A549 (cell line): ENCODE measurements at regions of chr3 and their contacts with region 1.

Region 1: DNA sequence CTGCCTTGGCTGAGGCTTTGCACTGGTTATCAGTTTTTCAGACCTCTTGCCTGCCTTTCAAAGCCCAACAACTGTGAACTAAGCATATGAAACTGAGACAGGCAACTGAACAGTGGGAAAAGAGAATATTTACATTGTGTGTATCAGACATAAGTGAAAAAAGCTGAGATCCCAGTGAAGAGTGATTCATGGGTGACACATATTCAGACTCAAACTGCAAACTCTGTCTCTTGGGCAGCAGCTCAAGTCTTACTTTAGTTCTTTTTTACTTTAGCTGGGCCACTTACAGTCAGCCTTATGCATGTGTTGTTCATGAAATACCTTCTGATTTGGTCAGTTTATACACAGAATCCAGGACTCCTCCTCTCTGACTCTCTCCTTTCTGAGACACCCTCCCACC is 19.2 kb downstream of the SUCLG2 start:
- DNase-seq: peak; percentile 7 to 52
- ATAC-seq: peak; percentile 80 to 89; a peak in 5 of 6 replicates
- H3K4me3 ChIP-seq: no peak overlapping the region
- H3K27ac ChIP-seq: peak overlapping the region; percentile 73 to 91
- H3K4me1 ChIP-seq: peaks cover 46% of the 10 kb centered on the region
- CTCF ChIP-seq: no peak
- EP300 ChIP-seq: no peak
- POLR2A ChIP-seq: no peak
- RAD21 ChIP-seq: no peak

Region 2: GRCh38 chr3:67384760-67385397 is 250.4 kb before region 1 on chr3:
- CTCF ChIA-PET with region 1: no interaction called
- POLR2A ChIA-PET with region 1: no interaction called
- DNase-seq: peak; percentile 6 to 57
- ATAC-seq: peak; percentile 47 to 83; a peak in 5 of 6 replicates
- H3K4me3 ChIP-seq: no peak overlapping the region
- H3K27ac ChIP-seq: no peak overlapping the region
- H3K4me1 ChIP-seq: 0 out of 3 replicates have a peak, but pooled peaks cover 10% of the 10 kb centered on the region
- CTCF ChIP-seq: peak; percentile 34
- EP300 ChIP-seq: no peak
- POLR2A ChIP-seq: no peak
- RAD21 ChIP-seq: peak in 1 of 2 experiments; percentile 47; a peak in 3 of 5 replicates

Region 3: GRCh38 chr3:67593761-67594244 is 41.5 kb before region 1 on chr3:
- CTCF ChIA-PET with region 1: no interaction called
- POLR2A ChIA-PET with region 1: no interaction called
- DNase-seq: peak; percentile 4 to 75
- ATAC-seq: peak; percentile 86 to 93; a peak in 5 of 6 replicates
- H3K4me3 ChIP-seq: no peak overlapping the region
- H3K27ac ChIP-seq: peak overlapping the region; percentile 32 to 57; a peak in 4 of 6 replicates
- H3K4me1 ChIP-seq: peaks cover 17% of the 10 kb centered on the region
- CTCF ChIP-seq: 0 out of 3 replicates have a peak, but pooled peaks have one; percentile 15
- EP300 ChIP-seq: no peak
- POLR2A ChIP-seq: no peak
- RAD21 ChIP-seq: peak; percentile 43 to 48; a peak in 4 of 5 replicates

Region 4: GRCh38 chr3:67647390-67647878 is 12.2 kb after region 1 on chr3:
- CTCF ChIA-PET with region 1: interaction called, 4 read pairs
- POLR2A ChIA-PET with region 1: interaction called, 11 read pairs
- DNase-seq: peak; percentile 77 to 98
- ATAC-seq: peak; percentile 89 to 92
- H3K4me3 ChIP-seq: no peak overlapping the region
- H3K27ac ChIP-seq: peak overlapping the region; percentile 99 to 100
- H3K4me1 ChIP-seq: peaks cover 78% of the 10 kb centered on the region
- CTCF ChIP-seq: no peak
- EP300 ChIP-seq: peak; percentile 84 to 97; a peak in 4 of 5 replicates
- POLR2A ChIP-seq: no peak
- RAD21 ChIP-seq: peak; percentile 24 to 61

Region 5: DNA sequence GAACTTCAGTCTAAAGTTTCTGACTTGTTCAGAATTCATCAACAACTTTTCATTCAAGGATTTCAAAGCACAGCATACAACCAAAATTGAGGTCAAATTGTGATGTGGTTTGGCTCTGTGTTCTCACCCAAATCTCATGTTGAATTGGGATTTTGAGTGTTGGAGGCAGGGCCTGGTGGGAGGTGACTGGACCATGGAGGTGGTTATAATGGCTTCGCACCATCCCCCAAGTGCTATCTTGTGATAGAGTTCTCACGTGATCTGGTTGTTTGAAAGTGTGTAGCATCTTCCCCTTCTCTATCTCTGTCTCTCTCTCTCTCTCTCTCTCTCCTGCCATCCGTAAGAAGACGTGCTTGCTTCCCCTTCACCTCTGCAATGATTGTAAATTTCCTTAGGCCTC is 38.8 kb after region 1 on chr3:
- CTCF ChIA-PET with region 1: no interaction called
- POLR2A ChIA-PET with region 1: no interaction called
- DNase-seq: no peak
- ATAC-seq: no peak
- H3K4me3 ChIP-seq: no peak overlapping the region
- H3K27ac ChIP-seq: no peak overlapping the region
- H3K4me1 ChIP-seq: no peaks in the 10 kb centered on the region
- CTCF ChIP-seq: no peak
- EP300 ChIP-seq: no peak
- POLR2A ChIP-seq: no peak
- RAD21 ChIP-seq: no peak